GM12878 (cell line): ENCODE measurements at regions of chr12 and their contacts with region 1.

Region 1: DNA sequence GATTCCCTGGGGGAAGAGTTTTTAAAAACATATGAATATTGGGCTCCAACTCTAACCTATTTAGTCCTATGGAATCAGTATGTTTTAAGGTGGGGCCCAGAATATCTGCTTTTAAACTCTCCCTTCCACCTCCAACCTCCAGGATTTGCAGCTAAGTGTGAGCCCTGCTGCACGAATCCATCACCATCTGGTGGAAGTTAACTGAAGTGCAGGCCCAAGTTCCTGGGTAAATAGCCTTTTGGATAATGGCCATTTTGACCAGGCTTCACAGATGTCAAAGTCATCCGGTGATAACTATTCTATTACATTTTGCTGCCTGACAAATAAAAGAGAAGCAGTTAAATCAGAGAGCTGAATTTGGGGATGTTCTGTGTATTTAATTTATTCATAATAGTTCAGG is 58.1 kb upstream of the RMST start:
- DNase-seq: peak; percentile 23
- ATAC-seq: peak; percentile 90
- H3K4me3 ChIP-seq: no peak overlapping the region
- H3K27ac ChIP-seq: no peak overlapping the region
- H3K4me1 ChIP-seq: peaks cover 7% of the 10 kb centered on the region; the same call in 1 of the 2 replicates
- H3K27me3 ChIP-seq: no peaks in the 10 kb centered on the region
- CTCF ChIP-seq: peak; percentile 76 to 84 (median 83)
- EP300 ChIP-seq: no peak
- POLR2A ChIP-seq: no peak
- RAD21 ChIP-seq: peak; percentile 96

Region 2: GRCh38 chr12:97148941-97149559 is 255.5 kb before region 1 on chr12:
- CTCF ChIA-PET with region 1: interaction called, 52 read pairs
- POLR2A ChIA-PET with region 1: no interaction called
- RAD21 ChIA-PET with region 1: interaction called, 25 read pairs
- SMC1A ChIA-PET with region 1: interaction called, 15 read pairs
- in situ Hi-C with region 1: no loop called
- intact Hi-C with region 1: loop called (anchors 1 kb)
- DNase-seq: no peak
- ATAC-seq: peak; percentile 100
- H3K4me3 ChIP-seq: no peak overlapping the region
- H3K27ac ChIP-seq: no peak overlapping the region
- H3K4me1 ChIP-seq: no peaks in the 10 kb centered on the region
- H3K27me3 ChIP-seq: no peaks in the 10 kb centered on the region; a peak in 1 of 4 replicates
- CTCF ChIP-seq: peak; percentile 90 to 96 (median 90)
- EP300 ChIP-seq: no peak
- POLR2A ChIP-seq: no peak
- RAD21 ChIP-seq: peak; percentile 88

Region 3: GRCh38 chr12:97375310-97375709 is 29.2 kb before region 1 on chr12:
- CTCF ChIA-PET with region 1: interaction called, 10 read pairs
- POLR2A ChIA-PET with region 1: no interaction called
- RAD21 ChIA-PET with region 1: interaction called, 18 read pairs
- SMC1A ChIA-PET with region 1: interaction called, 7 read pairs
- in situ Hi-C with region 1: no loop called
- intact Hi-C with region 1: no loop called
- DNase-seq: peak; percentile 27
- ATAC-seq: peak; percentile 59
- H3K4me3 ChIP-seq: no peak overlapping the region
- H3K27ac ChIP-seq: no peak overlapping the region; the same call in 1 of the 2 replicates
- H3K4me1 ChIP-seq: no peaks in the 10 kb centered on the region
- H3K27me3 ChIP-seq: no peaks in the 10 kb centered on the region
- CTCF ChIP-seq: no peak
- EP300 ChIP-seq: no peak
- POLR2A ChIP-seq: no peak
- RAD21 ChIP-seq: no peak